Naive thymus-derived CD8-positive, alpha-beta T cell (primary cell): ENCODE measurements at regions of chr22 and their contacts with region 1.

Region 1: GRCh38 chr22:46737976-46738646 is at the start of gene CERK:
- DNase-seq: peak; percentile 39 to 80 (median 58)
- ATAC-seq: peak; percentile 45 to 65
- H3K4me3 Mint-ChIP-seq: peak within 1 kb of the TSS; percentile 91 to 100 (median 100)
- H3K27ac Mint-ChIP-seq: peak within 1 kb of the TSS; percentile 95 to 100 (median 99)
- H3K4me1 Mint-ChIP-seq: peaks cover 25 to 48% (median 48%) of the 10 kb centered on the region in 4 donors
- H3K27me3 Mint-ChIP-seq: no peaks in the 10 kb centered on the region
- polyA plus RNA-seq, gene CERK: 39.4 to 61.2 (median 41.6) TPM

Region 2: DNA sequence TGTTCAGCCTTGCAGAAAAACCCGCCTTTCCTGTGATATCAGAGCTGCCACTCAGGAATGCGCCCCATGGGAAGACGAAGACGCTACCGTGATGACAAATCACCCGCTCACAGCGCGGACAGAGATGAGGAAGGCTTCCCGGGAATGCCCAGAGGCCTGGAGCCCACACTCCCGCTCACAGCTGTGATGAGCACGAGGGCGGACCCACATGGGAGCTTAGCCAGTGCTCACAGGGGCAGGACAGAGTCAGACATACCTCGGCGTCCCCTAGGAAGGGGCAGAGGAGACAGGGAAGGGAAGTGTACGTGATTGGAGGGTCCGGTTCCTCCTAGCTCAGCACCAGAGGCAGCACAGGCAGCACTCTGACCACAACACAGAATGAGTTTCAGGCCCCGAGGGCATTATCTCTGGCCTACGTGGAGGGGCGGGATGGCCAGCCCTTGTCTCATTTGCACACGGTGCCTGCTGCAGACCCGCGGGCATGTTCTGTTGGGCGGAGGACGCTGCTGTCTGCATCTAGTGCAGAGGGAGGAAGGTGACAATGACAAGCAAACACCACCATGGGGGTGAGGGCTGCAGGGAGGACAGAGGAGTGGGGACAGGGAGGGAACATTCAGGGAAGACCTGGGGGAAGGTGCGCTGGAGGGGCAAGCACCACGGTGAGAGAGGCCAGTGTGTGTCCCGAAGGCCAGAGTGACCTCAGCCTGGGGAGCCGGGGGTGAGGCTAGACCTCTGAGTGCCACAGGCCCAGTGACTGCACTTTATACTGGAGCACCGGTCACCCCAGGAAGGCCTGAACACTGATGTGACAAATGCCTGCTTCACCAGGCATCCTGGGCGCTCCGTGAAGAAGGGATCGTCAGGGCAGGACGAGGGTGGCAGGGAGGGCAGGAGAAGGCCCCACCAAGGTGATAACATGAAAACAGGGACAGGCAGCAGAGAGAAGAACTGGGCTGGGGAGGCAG is 280.3 kb before region 1 on chr22:
- POLR2A ChIA-PET with region 1: no interaction called
- DNase-seq: no peak
- ATAC-seq: no peak
- H3K4me3 Mint-ChIP-seq: no peak overlapping the region
- H3K27ac Mint-ChIP-seq: peak overlapping the region in 1 of 10 donors; percentile 63
- H3K4me1 Mint-ChIP-seq: no peaks in the 10 kb centered on the region
- H3K27me3 Mint-ChIP-seq: peaks cover 2 to 17% (median 7%) of the 10 kb centered on the region in 5 donors

Region 3: DNA sequence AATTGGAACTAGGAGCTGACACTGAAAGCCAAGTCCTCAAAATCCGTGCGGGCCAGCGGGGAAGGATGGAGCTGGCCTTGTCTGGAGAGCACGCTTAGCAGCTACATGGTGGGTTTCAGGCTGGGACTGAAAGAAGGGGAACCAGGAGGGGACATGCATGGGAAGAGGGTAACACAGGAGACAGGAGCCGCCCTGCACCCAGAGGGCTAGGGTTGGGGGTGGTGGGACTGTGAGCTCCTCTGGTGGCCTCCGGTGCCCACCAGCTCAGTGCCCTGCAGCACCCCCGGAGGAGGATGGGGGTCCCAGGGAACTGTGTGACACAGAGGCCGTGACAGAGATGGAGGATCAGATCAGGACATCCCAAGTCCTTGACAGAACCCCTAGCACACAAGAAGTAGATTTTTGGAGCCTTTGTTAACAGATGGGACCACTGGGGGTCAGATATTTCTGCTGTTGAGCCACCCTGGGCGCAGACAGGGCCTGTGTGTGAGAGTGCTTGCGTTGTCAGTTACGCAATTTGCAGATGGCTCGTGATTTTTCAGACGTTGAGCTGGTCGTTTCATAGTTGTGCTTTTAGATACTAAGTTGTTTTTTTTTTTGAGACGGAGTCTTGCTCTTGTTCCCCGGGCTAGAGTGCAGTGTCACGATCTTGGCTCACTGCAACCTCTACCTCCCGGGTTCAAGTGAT is 139.2 kb before region 1 on chr22:
- POLR2A ChIA-PET with region 1: no interaction called
- DNase-seq: peak in 1 of 10 donors; percentile 50
- ATAC-seq: no peak
- H3K4me3 Mint-ChIP-seq: no peak overlapping the region
- H3K27ac Mint-ChIP-seq: peak overlapping the region in 1 of 10 donors; percentile 10
- H3K4me1 Mint-ChIP-seq: peaks cover 4 to 10% (median 7%) of the 10 kb centered on the region in 4 donors
- H3K27me3 Mint-ChIP-seq: peaks cover 0 to 3% (median 0%) of the 10 kb centered on the region in 5 donors

Region 4: GRCh38 chr22:46748908-46749675 is 11.0 kb after region 1 on chr22:
- POLR2A ChIA-PET with region 1: interaction called, 134 read pairs
- DNase-seq: peak; percentile 28 to 85 (median 65)
- ATAC-seq: peak; percentile 96 to 98
- H3K4me3 Mint-ChIP-seq: peak overlapping the region; percentile 64 to 90 (median 82)
- H3K27ac Mint-ChIP-seq: peak overlapping the region; percentile 92 to 99 (median 96)
- H3K4me1 Mint-ChIP-seq: peaks cover 17 to 35% (median 30%) of the 10 kb centered on the region in 4 donors
- H3K27me3 Mint-ChIP-seq: peaks cover 0 to 2% (median 0%) of the 10 kb centered on the region in 5 donors

Region 5: GRCh38 chr22:46754110-46754799 is 16.1 kb after region 1 on chr22:
- POLR2A ChIA-PET with region 1: interaction called, 134 read pairs
- DNase-seq: no peak
- ATAC-seq: no peak
- H3K4me3 Mint-ChIP-seq: peak overlapping the region in 1 of 10 donors; percentile 55
- H3K27ac Mint-ChIP-seq: peak overlapping the region in 4 of 10 donors; percentile 10 to 91 (median 62)
- H3K4me1 Mint-ChIP-seq: peaks cover 23 to 46% (median 35%) of the 10 kb centered on the region in 4 donors
- H3K27me3 Mint-ChIP-seq: peaks cover 0 to 2% (median 0%) of the 10 kb centered on the region in 5 donors

Region 6: DNA sequence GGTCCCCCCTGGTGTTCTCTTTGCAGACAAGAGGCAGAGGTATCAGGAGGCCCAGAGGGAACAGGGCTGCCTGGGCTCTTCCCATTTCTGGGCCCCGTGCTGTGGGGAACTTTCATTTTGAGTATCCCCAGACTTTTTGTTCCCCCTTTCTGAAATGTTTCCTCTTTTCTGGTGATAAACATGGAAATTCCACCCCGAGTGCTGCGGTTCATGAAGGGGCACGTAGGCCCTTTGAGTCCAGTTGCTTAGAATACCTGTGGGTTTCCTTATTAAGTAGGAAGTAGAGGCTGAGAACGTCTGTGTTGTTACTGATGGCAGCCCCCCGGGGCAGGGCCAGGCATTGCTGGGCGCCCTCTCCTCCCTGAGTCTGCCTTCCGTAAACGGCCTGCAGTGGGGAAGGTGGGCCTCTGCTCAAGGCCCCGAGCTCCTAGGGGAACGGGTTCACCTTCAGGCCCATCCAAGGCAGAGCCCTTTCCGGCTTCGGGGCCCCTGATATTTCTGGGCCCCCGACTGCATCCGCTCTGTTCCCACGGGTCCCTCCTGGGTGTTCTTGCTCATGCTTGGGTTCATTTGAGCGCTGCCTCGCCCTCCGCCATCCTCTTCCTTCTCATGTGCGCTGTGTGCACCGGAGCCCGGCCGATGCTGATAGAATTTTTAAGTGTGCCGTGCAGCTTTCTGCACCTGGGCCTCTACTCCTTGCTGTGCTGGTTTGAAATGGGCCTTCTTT is 36.3 kb after region 1 on chr22:
- POLR2A ChIA-PET with region 1: no interaction called
- DNase-seq: no peak
- ATAC-seq: peak; percentile 24 to 33
- H3K4me3 Mint-ChIP-seq: peak overlapping the region; percentile 33 to 83 (median 72)
- H3K27ac Mint-ChIP-seq: peak overlapping the region; percentile 79 to 95 (median 90)
- H3K4me1 Mint-ChIP-seq: peaks cover 47 to 90% (median 79%) of the 10 kb centered on the region in 4 donors
- H3K27me3 Mint-ChIP-seq: no peaks in the 10 kb centered on the region

Region 7: GRCh38 chr22:46803031-46803880 is 65.1 kb after region 1 on chr22:
- POLR2A ChIA-PET with region 1: interaction called, 10 read pairs
- DNase-seq: peak; percentile 66 to 85 (median 73)
- ATAC-seq: peak; percentile 85 to 89
- H3K4me3 Mint-ChIP-seq: peak overlapping the region in 6 of 10 donors; percentile 13 to 59 (median 46)
- H3K27ac Mint-ChIP-seq: peak overlapping the region; percentile 66 to 93 (median 82)
- H3K4me1 Mint-ChIP-seq: peaks cover 27 to 67% (median 62%) of the 10 kb centered on the region in 4 donors
- H3K27me3 Mint-ChIP-seq: no peaks in the 10 kb centered on the region

Region 8: GRCh38 chr22:46815896-46816731 is 78.0 kb after region 1 on chr22:
- POLR2A ChIA-PET with region 1: no interaction called
- DNase-seq: no peak
- ATAC-seq: peak in 1 of 2 donors; percentile 72
- H3K4me3 Mint-ChIP-seq: no peak overlapping the region
- H3K27ac Mint-ChIP-seq: peak overlapping the region in 3 of 10 donors; percentile 20 to 41 (median 39)
- H3K4me1 Mint-ChIP-seq: peaks cover 48 to 72% (median 67%) of the 10 kb centered on the region in 4 donors
- H3K27me3 Mint-ChIP-seq: no peaks in the 10 kb centered on the region